ENCODE measurements at regions of chr16 and their contacts with region 1.

Region 1: GRCh38 chr16:71808593-71809459 is at the start of gene AP1G1:
- DNase-seq: peak; percentile 95 to 97
- ATAC-seq: peak; percentile 95 to 97
- H3K4me3 ChIP-seq: peak within 1 kb of the TSS; percentile 77 to 99 (median 94)
- H3K27ac ChIP-seq: peak within 1 kb of the TSS; percentile 91 to 99 (median 94)
- H3K4me1 ChIP-seq: peaks cover 30 to 45% of the 10 kb centered on the region in 2 donors
- H3K27me3 ChIP-seq: no peaks in the 10 kb centered on the region
- CTCF ChIP-seq: no peak
- POLR2A ChIP-seq: peak; percentile 62 to 70
- total RNA-seq, gene AP1G1: 60.7 to 80.6 (median 66.3) TPM

Region 2: GRCh38 chr16:71723537-71724319 is 85.1 kb before region 1 on chr16:
- in situ Hi-C with region 1: no loop called
- intact Hi-C with region 1: loop called (anchors 1 kb)
- DNase-seq: peak; percentile 42 to 74
- ATAC-seq: peak; percentile 86 to 90
- H3K4me3 ChIP-seq: peak overlapping the region; percentile 66 to 89 (median 86)
- H3K27ac ChIP-seq: peak overlapping the region; percentile 79 to 85 (median 84)
- H3K4me1 ChIP-seq: peaks cover 11 to 27% of the 10 kb centered on the region in 2 donors
- H3K27me3 ChIP-seq: no peaks in the 10 kb centered on the region
- CTCF ChIP-seq: peak in 3 of 5 experiments; percentile 12 to 17 (median 14)
- POLR2A ChIP-seq: peak; percentile 63 to 70

Region 3: GRCh38 chr16:71845639-71846430 is 37.0 kb after region 1 on chr16 and contains the start of gene ATXN1L:
- in situ Hi-C with region 1: no loop called
- intact Hi-C with region 1: loop called (anchors 2 kb)
- DNase-seq: peak; percentile 74 to 90
- ATAC-seq: peak; percentile 88 to 90
- H3K4me3 ChIP-seq: peak within 1 kb of the TSS; percentile 83 to 100 (median 94)
- H3K27ac ChIP-seq: peak within 1 kb of the TSS; percentile 87 to 93 (median 88)
- H3K4me1 ChIP-seq: peaks cover 22 to 25% of the 10 kb centered on the region in 2 donors
- H3K27me3 ChIP-seq: no peaks in the 10 kb centered on the region
- CTCF ChIP-seq: peak in 1 of 5 experiments; percentile 33
- POLR2A ChIP-seq: peak; percentile 78 to 85
- total RNA-seq, gene ATXN1L: 15.8 to 22.6 (median 19.4) TPM

Region 4: GRCh38 chr16:71883849-71884638 is 75.2 kb after region 1 on chr16 and contains the start of gene ZNF821:
- in situ Hi-C with region 1: no loop called
- intact Hi-C with region 1: loop called (anchors 2 kb)
- DNase-seq: peak; percentile 61 to 74
- ATAC-seq: peak; percentile 80 to 84
- H3K4me3 ChIP-seq: peak within 1 kb of the TSS; percentile 72 to 93 (median 90)
- H3K27ac ChIP-seq: peak within 1 kb of the TSS; percentile 90 to 96 (median 92)
- H3K4me1 ChIP-seq: peaks cover 7 to 8% of the 10 kb centered on the region in 2 donors
- H3K27me3 ChIP-seq: no peaks in the 10 kb centered on the region
- CTCF ChIP-seq: peak; percentile 40 to 52 (median 51)
- POLR2A ChIP-seq: peak; percentile 45 to 53
- total RNA-seq, gene ZNF821: 4.0 to 19.4 (median 8.1) TPM

Region 5: DNA sequence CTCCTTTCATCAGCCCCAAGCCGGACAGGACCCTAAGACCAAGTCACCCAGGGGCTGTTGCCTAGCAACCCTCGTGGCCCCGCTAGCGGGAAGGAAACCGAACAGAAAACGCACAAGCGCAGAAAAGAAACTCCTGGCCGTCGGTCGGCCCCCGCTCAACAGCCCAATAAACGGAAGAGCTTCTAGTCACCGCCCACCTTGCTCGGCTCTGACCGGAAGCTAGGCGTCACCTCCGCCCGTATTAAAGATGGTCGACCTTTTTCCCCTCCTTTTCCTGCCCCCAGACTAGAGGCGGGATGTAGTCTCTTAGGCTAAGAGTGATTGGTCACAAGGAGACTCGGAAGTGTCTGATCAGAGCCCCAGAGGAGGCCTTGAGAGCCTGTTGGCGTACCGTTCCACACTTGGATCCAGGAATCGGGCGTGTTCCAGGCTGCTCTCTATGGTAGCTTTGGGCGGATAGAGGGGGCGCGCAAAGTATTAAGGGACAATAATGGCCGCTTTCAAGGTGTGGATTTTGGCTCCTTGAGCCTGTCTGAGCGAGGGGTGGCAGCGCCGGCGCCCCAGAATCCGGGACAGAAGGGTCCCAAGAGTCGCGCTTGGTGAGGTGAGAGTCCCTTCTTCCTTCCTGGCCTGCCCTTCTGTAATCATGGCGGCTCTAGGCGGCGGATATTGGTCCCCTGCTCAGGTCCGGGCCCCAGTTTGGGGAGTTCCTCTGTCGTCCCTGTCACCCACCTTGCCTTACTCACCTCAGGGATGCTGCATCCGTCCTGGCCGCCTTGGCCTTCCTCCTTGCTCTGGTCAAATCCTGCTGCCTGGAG is 284.8 kb after region 1 on chr16 and contains the starts of genes DHX38 and TXNL4B:
- in situ Hi-C with region 1: loop called in 1 of 4 experiments (anchors 10 kb)
- intact Hi-C with region 1: no loop called
- DNase-seq: peak; percentile 94 to 95
- ATAC-seq: peak; percentile 99 to 100
- H3K4me3 ChIP-seq: peak within 1 kb of the TSS; percentile 89 to 95 (median 92)
- H3K27ac ChIP-seq: peak within 1 kb of the TSS; percentile 87 to 96 (median 92)
- H3K4me1 ChIP-seq: peaks cover 29 to 32% of the 10 kb centered on the region in 2 donors
- H3K27me3 ChIP-seq: no peaks in the 10 kb centered on the region
- CTCF ChIP-seq: no peak
- POLR2A ChIP-seq: peak; percentile 87 to 93
- total RNA-seq, gene DHX38: 26.9 to 75.3 (median 53.8) TPM
- total RNA-seq, gene TXNL4B: 6.0 to 13.7 (median 10.0) TPM